ENCODE measurements at regions of chr11 and their contacts with region 1.

Region 1: DNA sequence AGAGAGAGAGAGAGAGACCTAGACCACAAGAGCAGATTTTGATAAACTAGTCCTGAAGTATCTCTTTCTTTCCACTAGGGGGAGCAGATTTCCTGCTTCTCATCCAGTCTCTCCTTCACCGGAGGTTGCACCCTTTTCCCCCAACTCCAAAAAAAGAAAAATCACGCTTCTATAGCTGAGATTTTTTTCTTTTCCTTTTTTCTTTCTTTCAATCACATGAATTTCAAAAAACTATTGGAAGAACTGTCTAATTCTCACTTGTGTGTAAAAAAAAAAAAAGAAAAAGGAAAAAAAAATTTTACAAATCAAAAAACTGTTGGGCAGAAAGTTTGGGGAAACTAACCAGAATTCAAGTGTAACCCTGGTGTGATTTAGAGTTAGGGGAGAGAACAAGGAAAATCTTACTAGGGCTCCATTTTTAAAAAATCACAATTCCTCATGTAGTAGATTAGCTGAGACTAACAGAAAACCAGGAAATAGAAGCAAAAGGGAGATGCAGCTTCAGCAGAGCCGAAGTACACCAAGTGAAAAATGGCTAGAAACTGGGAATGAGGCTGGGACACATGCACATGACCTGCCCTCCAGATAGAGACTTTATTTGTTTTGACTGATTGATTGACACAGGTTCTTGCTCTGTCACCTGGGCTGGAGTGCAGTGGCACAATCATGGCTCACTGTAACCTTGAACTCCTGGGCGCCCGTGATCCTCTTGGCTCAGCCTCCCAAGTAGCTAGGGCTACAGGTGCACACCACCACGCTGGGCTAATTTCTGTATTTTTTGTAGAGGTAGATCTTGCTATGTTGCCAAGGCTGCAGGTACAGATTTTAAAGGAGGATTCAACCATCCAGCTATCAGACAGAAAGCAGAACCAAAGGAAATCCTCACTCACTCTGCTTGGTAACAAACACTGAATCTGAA is 27.1 kb downstream of the SDHD start:
- DNase-seq: no peak
- ATAC-seq: peak; percentile 56
- H3K4me3 Mint-ChIP-seq: no peak overlapping the region
- H3K27ac Mint-ChIP-seq: no peak overlapping the region
- H3K4me1 Mint-ChIP-seq: peaks cover 2% of the 10 kb centered on the region
- H3K27me3 Mint-ChIP-seq: no peaks in the 10 kb centered on the region
- CTCF ChIP-seq: peak; percentile 70

Region 2: DNA sequence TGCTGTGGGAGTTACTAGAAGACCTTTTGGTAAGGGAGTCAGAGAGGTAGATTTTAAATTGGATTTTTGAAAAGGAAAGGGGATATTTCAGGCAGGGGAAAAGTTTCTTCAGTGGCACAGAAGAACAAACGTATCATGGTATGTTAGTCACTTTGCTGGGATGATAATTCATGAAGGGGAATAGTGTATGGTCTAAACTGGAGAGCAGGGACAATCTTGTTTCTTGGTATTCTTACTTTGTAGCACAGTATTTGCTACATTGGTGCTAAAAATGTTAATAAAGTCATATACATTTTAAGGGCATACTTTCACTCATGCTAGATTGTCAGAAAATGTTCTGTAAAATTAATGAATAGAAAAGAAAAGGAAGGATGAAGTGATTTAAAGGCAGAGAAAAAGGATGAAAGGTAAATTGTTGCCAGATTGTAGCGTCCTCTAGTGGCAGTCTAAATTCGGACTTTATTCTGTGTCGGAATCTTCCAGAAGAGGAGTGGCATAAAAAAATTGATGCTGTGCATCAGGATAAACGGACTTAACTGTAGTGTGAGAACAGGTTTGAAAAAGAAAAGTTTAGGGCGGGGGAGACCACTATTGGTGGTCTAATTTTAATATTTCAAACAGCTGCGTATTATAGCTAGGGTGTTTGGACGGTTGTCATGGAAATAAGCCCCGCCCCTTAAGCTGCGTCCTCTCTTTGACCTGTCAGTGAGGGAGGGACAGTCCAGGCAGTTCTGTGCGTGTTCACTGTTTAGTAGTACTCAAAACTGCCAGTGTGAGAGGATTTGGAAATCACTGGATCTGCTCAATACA is 61.2 kb after region 1 on chr11 and contains the start of gene BCO2:
- CTCF ChIA-PET with region 1: no interaction called
- POLR2A ChIA-PET with region 1: no interaction called
- intact Hi-C with region 1: loop called (anchors 1 kb)
- DNase-seq: peak; percentile 18
- ATAC-seq: peak; percentile 74
- H3K4me3 Mint-ChIP-seq: peak within 1 kb of the TSS; percentile 46
- H3K27ac Mint-ChIP-seq: no peak within 1 kb of the TSS
- H3K4me1 Mint-ChIP-seq: peaks cover 23% of the 10 kb centered on the region
- H3K27me3 Mint-ChIP-seq: peaks cover 9% of the 10 kb centered on the region
- CTCF ChIP-seq: no peak
- total RNA-seq, gene BCO2: 1.4 and 3.2 TPM in 2 replicates

Region 3: GRCh38 chr11:113289431-113290187 is 1175.8 kb after region 1 on chr11:
- CTCF ChIA-PET with region 1: interaction called, 6 read pairs
- POLR2A ChIA-PET with region 1: no interaction called
- intact Hi-C with region 1: loop called (anchors 5 kb)
- DNase-seq: peak; percentile 66
- ATAC-seq: peak; percentile 100
- H3K4me3 Mint-ChIP-seq: no peak overlapping the region
- H3K27ac Mint-ChIP-seq: no peak overlapping the region
- H3K4me1 Mint-ChIP-seq: peaks cover 2% of the 10 kb centered on the region
- H3K27me3 Mint-ChIP-seq: peaks cover 4% of the 10 kb centered on the region
- CTCF ChIP-seq: peak; percentile 83

Measured in activated B cell treated with CpG ODN at 0.5 μM for 24 hours (primary cell).